PC-3 (cell line): ENCODE measurements at regions of chr14 and their contacts with region 1.

Region 1: GRCh38 chr14:53539489-53540126 is 386.5 kb upstream of the DDHD1 start:
- DNase-seq: peak; percentile 92
- ATAC-seq: peak; percentile 62
- H3K4me3 ChIP-seq: no peak overlapping the region
- H3K27ac ChIP-seq: peak overlapping the region; percentile 3; the same call in 1 of the 2 replicates
- H3K4me1 ChIP-seq: peaks cover 26% of the 10 kb centered on the region
- H3K27me3 ChIP-seq: no peaks in the 10 kb centered on the region
- CTCF ChIP-seq: peak; percentile 98

Region 2: DNA sequence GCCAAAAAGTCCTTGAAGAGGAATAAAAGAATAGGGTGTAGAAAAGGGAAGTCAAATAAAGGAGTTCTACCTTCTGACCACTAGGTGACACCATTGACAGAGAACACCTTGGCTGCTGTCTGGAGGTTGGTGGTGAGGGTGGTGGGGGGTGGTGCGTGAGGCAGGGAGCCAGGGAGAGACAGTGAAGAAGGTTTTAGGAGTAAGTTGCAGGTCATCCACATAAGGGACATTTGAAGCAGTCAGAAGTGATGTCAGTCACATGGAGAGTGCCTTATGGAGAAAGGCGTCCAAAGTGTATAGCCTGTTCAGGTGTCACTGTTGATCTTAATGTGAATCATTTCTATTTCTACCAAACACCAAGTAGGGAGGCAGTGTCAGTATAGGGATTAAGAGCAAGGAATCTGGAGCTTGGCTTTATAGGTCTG is 107.2 kb before region 1 on chr14:
- CTCF ChIA-PET with region 1: interaction called, 8 read pairs
- POLR2A ChIA-PET with region 1: no interaction called
- intact Hi-C with region 1: loop called (anchors 1 kb)
- DNase-seq: peak; percentile 77
- ATAC-seq: peak; percentile 95
- H3K4me3 ChIP-seq: no peak overlapping the region
- H3K27ac ChIP-seq: no peak overlapping the region
- H3K4me1 ChIP-seq: peaks cover 18% of the 10 kb centered on the region
- H3K27me3 ChIP-seq: no peaks in the 10 kb centered on the region
- CTCF ChIP-seq: peak; percentile 96

Region 3: GRCh38 chr14:53640685-53641084 is 101.1 kb after region 1 on chr14:
- CTCF ChIA-PET with region 1: no interaction called
- POLR2A ChIA-PET with region 1: no interaction called
- intact Hi-C with region 1: no loop called
- DNase-seq: peak; percentile 26
- ATAC-seq: no peak
- H3K4me3 ChIP-seq: no peak overlapping the region
- H3K27ac ChIP-seq: no peak overlapping the region
- H3K4me1 ChIP-seq: no peaks in the 10 kb centered on the region
- H3K27me3 ChIP-seq: no peaks in the 10 kb centered on the region
- CTCF ChIP-seq: no peak

Region 4: DNA sequence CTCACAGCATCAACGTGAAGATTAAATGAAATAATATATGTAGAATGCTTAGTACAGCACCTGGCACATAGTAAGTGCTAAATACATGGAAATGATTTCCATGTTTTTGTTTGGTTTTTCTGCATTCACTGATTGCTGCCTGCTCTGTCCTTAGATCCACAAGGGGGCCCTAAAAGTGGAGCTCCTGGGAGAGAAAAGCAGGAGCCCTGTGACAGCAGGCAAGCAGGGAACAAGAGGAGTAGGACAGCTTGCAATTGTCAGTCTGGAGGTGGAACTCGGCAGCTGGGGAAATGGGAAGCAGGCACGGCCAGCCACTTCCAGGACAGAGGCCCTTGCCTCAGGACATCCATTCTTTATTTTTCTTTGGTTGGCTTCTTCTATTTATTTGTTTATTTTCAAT is 124.1 kb after region 1 on chr14:
- CTCF ChIA-PET with region 1: no interaction called
- POLR2A ChIA-PET with region 1: no interaction called
- intact Hi-C with region 1: loop called (anchors 1 kb)
- DNase-seq: peak; percentile 53
- ATAC-seq: peak; percentile 93
- H3K4me3 ChIP-seq: no peak overlapping the region
- H3K27ac ChIP-seq: no peak overlapping the region
- H3K4me1 ChIP-seq: no peaks in the 10 kb centered on the region
- H3K27me3 ChIP-seq: peaks cover 2% of the 10 kb centered on the region; the same call in 1 of the 2 replicates
- CTCF ChIP-seq: peak; percentile 70

Region 5: GRCh38 chr14:53757732-53758131 is 218.1 kb after region 1 on chr14:
- CTCF ChIA-PET with region 1: no interaction called
- POLR2A ChIA-PET with region 1: no interaction called
- intact Hi-C with region 1: no loop called
- DNase-seq: no peak
- ATAC-seq: no peak
- H3K4me3 ChIP-seq: no peak overlapping the region
- H3K27ac ChIP-seq: no peak overlapping the region
- H3K4me1 ChIP-seq: no peaks in the 10 kb centered on the region
- H3K27me3 ChIP-seq: no peaks in the 10 kb centered on the region
- CTCF ChIP-seq: no peak

Region 6: DNA sequence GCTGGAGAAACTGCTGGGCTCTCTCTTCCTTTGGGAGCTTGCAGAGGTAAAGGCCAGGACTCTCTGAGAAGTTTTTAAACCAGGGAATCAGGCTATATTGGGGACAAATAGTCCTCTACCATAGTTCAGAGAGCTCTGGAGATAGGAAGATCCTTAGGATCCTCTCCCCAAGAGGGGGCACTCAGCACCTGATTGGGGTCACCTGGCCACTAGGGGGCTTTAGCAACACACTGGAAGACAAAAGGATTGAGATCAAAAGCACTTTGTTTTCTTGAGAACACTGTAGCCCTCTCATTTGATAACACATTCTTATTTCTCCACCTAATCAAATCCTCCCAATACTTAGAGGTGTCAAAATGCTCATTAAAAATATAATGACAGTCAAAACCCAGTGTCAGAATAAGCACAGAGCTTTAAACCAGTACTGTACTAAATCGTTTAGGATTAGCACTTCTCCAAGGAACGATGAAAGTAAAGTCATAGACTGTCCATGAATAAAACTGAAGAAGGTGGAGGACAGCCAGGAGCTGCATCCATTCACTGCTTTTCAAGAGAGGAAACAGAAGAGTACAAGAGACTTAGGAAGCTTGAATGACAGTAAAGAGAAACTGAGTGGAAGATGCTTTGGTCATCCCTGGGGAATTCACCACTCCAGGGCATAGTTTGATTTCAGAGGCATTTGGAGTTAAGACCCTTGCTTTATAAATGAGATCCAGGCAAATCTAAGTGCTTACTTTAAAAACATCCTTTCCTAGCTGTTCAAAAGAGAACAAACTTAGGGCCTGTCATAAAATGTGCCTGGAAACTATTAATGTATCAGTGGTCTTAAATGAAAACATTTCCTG is 390.5 kb after region 1 on chr14:
- CTCF ChIA-PET with region 1: no interaction called
- POLR2A ChIA-PET with region 1: no interaction called
- intact Hi-C with region 1: loop called (anchors 2 kb)
- DNase-seq: peak; percentile 68
- ATAC-seq: peak; percentile 68
- H3K4me3 ChIP-seq: no peak overlapping the region
- H3K27ac ChIP-seq: no peak overlapping the region
- H3K4me1 ChIP-seq: peaks cover 25% of the 10 kb centered on the region
- H3K27me3 ChIP-seq: no peaks in the 10 kb centered on the region
- CTCF ChIP-seq: peak; percentile 94

Region 7: GRCh38 chr14:54338696-54339317 is 799.2 kb after region 1 on chr14:
- CTCF ChIA-PET with region 1: interaction called, 4 read pairs
- POLR2A ChIA-PET with region 1: no interaction called
- intact Hi-C with region 1: loop called (anchors 1 kb)
- DNase-seq: peak; percentile 93
- ATAC-seq: peak; percentile 79
- H3K4me3 ChIP-seq: no peak overlapping the region
- H3K27ac ChIP-seq: no peak overlapping the region
- H3K4me1 ChIP-seq: peaks cover 35% of the 10 kb centered on the region
- H3K27me3 ChIP-seq: no peaks in the 10 kb centered on the region
- CTCF ChIP-seq: peak; percentile 99